AG04449 (cell line): ENCODE measurements at regions of chr3 and their contacts with region 1.

Region 1: DNA sequence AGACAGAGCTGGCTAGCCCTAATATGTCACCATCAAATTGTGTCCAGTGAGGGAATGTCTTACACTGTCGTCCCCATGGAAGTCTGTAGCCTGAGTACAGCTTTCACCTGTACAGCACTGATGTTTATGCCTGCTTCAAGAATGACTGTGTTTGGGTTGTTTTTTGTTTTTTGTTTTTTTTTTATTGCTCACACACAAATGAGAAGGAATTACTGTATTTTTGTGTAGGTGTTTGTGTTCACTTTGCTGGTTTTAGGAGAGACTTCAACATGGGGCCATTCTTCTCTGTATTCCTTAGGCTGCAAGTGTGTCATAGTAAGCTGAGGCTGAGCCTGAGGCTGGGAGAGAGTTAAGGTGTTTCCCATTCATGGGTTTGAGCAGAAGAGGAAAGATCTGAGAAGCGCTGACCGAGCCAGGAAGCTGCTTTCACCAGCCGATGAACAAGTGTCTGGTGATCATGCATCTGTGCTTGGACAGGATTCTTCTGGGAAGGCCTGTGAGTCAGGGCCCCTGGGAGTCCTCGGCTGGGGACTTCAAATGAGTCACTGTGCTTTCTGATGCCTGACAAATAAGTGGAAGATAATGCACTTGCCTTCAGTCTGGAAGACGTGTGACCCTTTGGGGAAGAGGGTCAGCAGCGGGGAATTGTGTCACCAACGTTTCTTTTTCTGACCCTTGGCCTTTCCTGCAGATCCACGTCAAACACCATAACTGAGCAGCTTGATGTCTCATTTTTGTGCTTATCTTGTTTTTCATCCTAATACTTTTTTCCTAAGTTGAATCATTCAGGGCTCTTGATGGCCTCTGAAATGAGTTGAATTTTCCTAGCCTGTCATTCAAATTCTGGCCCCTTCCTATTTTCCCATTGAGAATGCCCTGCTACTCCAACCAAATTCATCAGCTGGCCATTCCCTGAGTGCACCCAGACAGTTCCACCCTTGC is 36.7 kb upstream of the ZBTB38 start:
- DNase-seq: peak; percentile 90
- H3K4me3 ChIP-seq: no peak overlapping the region
- CTCF ChIP-seq: no peak

Region 2: GRCh38 chr3:141311496-141312353 is 19.9 kb before region 1 on chr3:
- CTCF ChIA-PET with region 1: interaction called, 38 read pairs
- POLR2A ChIA-PET with region 1: interaction called, 4 read pairs
- DNase-seq: peak; percentile 88
- H3K4me3 ChIP-seq: peak overlapping the region; percentile 96
- CTCF ChIP-seq: peak; percentile 89

Region 3: GRCh38 chr3:141321109-141321497 is 10.5 kb before region 1 on chr3:
- CTCF ChIA-PET with region 1: interaction called, 11 read pairs
- POLR2A ChIA-PET with region 1: no interaction called
- DNase-seq: no peak
- H3K4me3 ChIP-seq: no peak overlapping the region
- CTCF ChIP-seq: no peak

Region 4: GRCh38 chr3:141487521-141488252 is 156.0 kb after region 1 on chr3:
- CTCF ChIA-PET with region 1: no interaction called
- POLR2A ChIA-PET with region 1: no interaction called
- DNase-seq: no peak
- H3K4me3 ChIP-seq: peak overlapping the region; percentile 77
- CTCF ChIP-seq: no peak

Region 5: GRCh38 chr3:141754032-141754431 is 422.4 kb after region 1 on chr3:
- CTCF ChIA-PET with region 1: no interaction called
- POLR2A ChIA-PET with region 1: no interaction called
- DNase-seq: no peak
- H3K4me3 ChIP-seq: no peak overlapping the region
- CTCF ChIP-seq: no peak